CD4-positive, alpha-beta T cell (primary cell): ENCODE measurements at regions of chr15 and their contacts with region 1.

Region 1: DNA sequence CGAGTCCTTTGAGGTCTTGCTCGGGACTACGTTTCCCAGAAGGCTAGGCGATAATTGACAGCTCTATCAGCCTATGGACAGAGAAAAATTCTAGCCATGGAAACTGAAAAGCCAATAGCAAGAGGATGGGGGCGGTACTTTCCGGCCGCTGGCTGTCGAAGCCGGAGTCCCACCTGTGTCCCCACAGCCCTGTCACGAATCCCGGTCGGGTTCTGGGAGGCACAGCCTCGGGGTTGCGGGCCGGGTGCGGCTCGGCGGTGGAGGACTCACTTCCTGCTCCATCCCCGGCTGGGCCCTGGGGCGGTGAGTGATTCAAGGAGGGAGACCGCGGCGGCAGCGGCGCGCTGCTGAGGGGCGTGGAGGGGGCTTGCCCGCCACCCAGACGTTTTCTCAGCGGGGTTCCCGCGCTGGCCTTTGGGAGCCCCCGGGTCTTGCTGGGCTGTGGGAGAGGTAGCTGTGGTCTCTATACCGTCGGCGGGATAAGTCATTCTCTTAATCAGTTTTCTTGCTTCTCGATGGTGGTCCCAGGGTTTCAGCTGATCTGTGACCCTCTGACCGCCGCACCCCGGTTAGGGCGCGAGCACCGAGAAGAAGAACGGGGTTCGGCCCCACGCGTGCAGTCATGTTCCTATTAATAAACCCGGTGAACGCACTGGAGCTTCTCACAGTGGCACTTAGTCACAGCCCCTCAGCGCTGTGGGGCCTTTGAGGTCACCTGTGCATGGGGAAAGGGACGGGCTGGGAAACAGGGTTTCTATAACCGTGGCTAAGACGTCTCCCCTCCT is at the start of gene ZNF774:
- DNase-seq: peak; percentile 78 to 97 (median 84)
- ATAC-seq: peak; percentile 98
- H3K4me3 ChIP-seq: peak within 1 kb of the TSS; percentile 68
- H3K4me3 Mint-ChIP-seq: peak within 1 kb of the TSS; percentile 90
- H3K27ac ChIP-seq: no peak within 1 kb of the TSS
- H3K27ac Mint-ChIP-seq: peak within 1 kb of the TSS; percentile 56
- H3K4me1 ChIP-seq: peaks cover 20% of the 10 kb centered on the region
- H3K4me1 Mint-ChIP-seq: peaks cover 9% of the 10 kb centered on the region
- H3K27me3 ChIP-seq: no peaks in the 10 kb centered on the region
- H3K27me3 Mint-ChIP-seq: no peaks in the 10 kb centered on the region
- CTCF ChIP-seq: no peak
- total RNA-seq, gene ZNF774: 0.20 to 1.1 TPM

Region 2: GRCh38 chr15:90382305-90382704 is 30.0 kb after region 1 on chr15:
- CTCF ChIA-PET with region 1: no interaction called
- POLR2A ChIA-PET with region 1: interaction called, 7 read pairs
- intact Hi-C with region 1: loop called in 1 of 2 experiments (anchors 2 kb)
- DNase-seq: peak in 1 of 14 experiments; percentile 21
- ATAC-seq: no peak
- H3K4me3 ChIP-seq: no peak overlapping the region
- H3K4me3 Mint-ChIP-seq: no peak overlapping the region
- H3K27ac ChIP-seq: no peak overlapping the region
- H3K27ac Mint-ChIP-seq: no peak overlapping the region
- H3K4me1 ChIP-seq: peaks cover 21% of the 10 kb centered on the region
- H3K4me1 Mint-ChIP-seq: peaks cover 40% of the 10 kb centered on the region
- H3K27me3 ChIP-seq: no peaks in the 10 kb centered on the region
- H3K27me3 Mint-ChIP-seq: no peaks in the 10 kb centered on the region
- CTCF ChIP-seq: no peak

Region 3: DNA sequence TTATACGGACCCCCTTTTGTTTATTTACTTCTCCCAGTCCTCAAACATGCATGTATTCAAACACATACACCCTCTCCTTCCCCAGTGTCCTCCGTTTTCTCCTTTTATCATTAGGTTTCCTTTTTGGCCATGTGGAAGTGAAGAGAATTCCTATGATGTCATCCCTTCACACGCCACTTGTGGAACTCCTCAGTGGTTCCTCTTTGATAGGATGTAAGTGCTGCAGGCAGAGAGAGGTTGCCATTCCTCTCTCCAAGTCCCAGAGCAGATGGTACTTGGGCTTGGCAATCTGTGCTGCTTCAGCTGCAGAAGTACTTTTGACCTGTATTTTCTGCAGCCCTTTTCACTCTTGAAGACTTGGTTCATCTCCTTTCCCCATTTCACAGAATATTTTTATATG is 144.5 kb after region 1 on chr15:
- CTCF ChIA-PET with region 1: no interaction called
- POLR2A ChIA-PET with region 1: no interaction called
- intact Hi-C with region 1: no loop called
- DNase-seq: no peak
- ATAC-seq: no peak
- H3K4me3 ChIP-seq: no peak overlapping the region
- H3K4me3 Mint-ChIP-seq: no peak overlapping the region
- H3K27ac ChIP-seq: no peak overlapping the region
- H3K27ac Mint-ChIP-seq: no peak overlapping the region
- H3K4me1 ChIP-seq: peaks cover 7% of the 10 kb centered on the region
- H3K4me1 Mint-ChIP-seq: peaks cover 19% of the 10 kb centered on the region
- H3K27me3 ChIP-seq: no peaks in the 10 kb centered on the region
- H3K27me3 Mint-ChIP-seq: no peaks in the 10 kb centered on the region
- CTCF ChIP-seq: no peak

Region 4: DNA sequence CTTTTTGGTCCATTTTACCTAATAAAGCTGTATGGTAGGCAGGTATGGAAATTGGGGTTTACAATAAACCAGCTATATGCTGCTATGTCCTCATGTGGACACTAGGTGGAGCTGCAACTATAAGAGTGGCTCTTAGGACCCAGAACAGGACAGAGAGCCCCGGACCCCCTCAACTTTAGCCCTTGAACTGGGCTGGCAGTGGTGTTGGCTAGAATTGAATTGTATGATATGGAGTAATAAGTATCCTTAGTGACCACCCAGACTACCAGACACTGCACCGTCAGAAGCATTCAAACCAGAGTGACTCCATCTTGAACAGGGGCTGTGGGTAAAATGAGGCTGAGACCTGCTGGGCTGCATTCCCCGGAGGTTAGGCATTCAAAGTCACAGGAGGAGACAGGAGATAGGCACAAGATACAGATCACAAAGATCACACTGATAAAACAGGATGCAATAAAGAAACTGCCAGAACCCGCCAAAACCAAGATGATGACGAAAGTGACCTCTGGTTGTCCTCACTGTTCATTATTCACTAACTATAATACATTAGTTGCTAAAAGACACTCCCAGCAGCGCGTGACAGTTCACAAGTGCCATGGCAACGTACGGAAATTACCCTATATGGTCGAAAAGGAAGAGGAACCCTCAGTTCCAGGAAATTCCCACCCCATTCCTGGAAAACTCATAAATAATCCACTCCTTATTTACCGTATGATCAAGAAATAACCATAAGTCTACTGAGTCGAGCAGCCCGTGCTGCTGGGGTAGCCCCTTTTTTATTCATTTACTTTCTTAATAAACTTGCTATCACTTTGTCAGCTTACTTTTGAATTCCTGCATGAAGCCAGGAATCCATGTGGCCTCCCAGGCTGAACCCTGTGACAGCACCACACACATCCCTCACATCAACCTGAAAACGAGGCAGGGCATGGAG is 296.1 kb after region 1 on chr15:
- CTCF ChIA-PET with region 1: no interaction called
- POLR2A ChIA-PET with region 1: no interaction called
- intact Hi-C with region 1: no loop called
- DNase-seq: peak; percentile 17 to 83 (median 44)
- ATAC-seq: peak; percentile 83
- H3K4me3 ChIP-seq: no peak overlapping the region
- H3K4me3 Mint-ChIP-seq: peak overlapping the region; percentile 30
- H3K27ac ChIP-seq: no peak overlapping the region
- H3K27ac Mint-ChIP-seq: peak overlapping the region; percentile 16
- H3K4me1 ChIP-seq: peaks cover 27% of the 10 kb centered on the region
- H3K4me1 Mint-ChIP-seq: peaks cover 34% of the 10 kb centered on the region
- H3K27me3 ChIP-seq: peaks cover 0 to 2% of the 10 kb centered on the region in 2 experiments
- H3K27me3 Mint-ChIP-seq: no peaks in the 10 kb centered on the region
- CTCF ChIP-seq: peak; percentile 93